ENCODE measurements at regions of chr5 and their contacts with region 1.

Region 1: DNA sequence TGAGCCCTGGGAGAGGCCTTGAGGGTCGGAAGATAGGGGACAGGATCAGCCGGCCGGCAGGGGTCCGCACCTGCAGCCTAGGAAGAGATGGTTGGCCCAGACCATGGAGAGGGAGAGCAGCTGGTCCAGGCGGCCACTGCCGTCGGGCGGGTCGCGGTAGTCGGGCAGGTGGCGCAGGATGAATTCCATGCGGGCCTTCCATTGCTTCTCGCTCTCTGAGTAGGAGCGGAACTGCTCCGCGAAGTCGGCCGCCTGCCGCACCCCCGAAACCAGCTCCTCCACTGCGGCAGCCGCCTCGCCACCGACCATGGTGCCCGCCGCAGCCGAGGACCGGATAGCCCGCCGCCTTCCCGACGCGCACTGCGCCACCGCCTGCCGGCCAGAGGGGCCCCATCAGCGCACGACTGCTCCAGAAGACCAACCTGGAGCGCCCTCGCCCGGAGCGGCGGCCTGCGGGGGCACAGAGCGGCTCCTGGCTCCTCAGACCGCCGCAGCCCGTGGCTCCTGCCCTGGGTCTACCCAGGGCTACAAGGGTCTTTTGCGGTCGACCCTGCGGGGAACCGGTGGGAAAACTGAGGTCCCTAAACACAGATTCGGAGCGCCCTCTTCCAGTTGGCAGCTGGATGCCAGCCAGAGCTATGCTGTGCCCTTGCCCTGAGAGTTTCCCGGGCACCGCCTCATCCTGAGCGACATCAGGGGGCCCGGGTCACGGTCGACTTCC is at the start of gene CDKN2AIPNL:
- DNase-seq: peak; percentile 96
- ATAC-seq: peak; percentile 100
- H3K4me3 ChIP-seq: peak within 1 kb of the TSS; percentile 92
- H3K27ac ChIP-seq: peak within 1 kb of the TSS; percentile 87
- H3K4me1 ChIP-seq: peaks cover 22% of the 10 kb centered on the region
- H3K27me3 ChIP-seq: no peaks in the 10 kb centered on the region
- CTCF ChIP-seq: peak; percentile 80
- total RNA-seq, gene CDKN2AIPNL: 16.5 TPM

Region 2: GRCh38 chr5:134465816-134466240 is 54.1 kb after region 1 on chr5:
- intact Hi-C with region 1: loop called (anchors 10 kb)
- DNase-seq: peak; percentile 94
- ATAC-seq: peak; percentile 90
- H3K4me3 ChIP-seq: peak overlapping the region; percentile 63
- H3K27ac ChIP-seq: peak overlapping the region; percentile 100
- H3K4me1 ChIP-seq: peaks cover 31% of the 10 kb centered on the region
- H3K27me3 ChIP-seq: no peaks in the 10 kb centered on the region
- CTCF ChIP-seq: no peak